AG04450 (cell line): ENCODE measurements at regions of chr10 and their contacts with region 1.

Region 1: GRCh38 chr10:52488606-52489485 is 174.8 kb downstream of the DKK1 start:
- DNase-seq: no peak
- H3K4me3 ChIP-seq: no peak overlapping the region
- H3K27ac ChIP-seq: no peak overlapping the region
- H3K27me3 ChIP-seq: no peaks in the 10 kb centered on the region
- CTCF ChIP-seq: peak; percentile 58

Region 2: DNA sequence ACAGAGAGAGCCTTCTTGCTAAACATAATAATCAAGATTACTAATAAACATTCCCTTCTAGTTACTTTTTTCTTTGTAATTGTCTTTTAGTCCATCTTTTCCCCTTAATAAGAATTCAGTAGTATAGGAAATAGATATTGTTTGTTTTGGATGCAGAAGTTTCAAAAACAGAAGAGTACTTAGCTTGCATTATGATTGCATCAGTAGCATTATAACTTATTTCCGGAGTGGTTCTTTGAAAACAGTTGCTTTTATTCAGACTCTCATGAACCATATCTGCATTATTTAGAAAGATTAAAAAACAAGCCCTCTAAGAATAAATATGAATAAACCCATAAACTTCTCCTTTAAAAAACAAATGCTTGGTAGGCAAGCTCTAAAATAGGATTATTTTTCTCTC is 208.8 kb before region 1 on chr10:
- CTCF ChIA-PET with region 1: no interaction called
- POLR2A ChIA-PET with region 1: no interaction called
- DNase-seq: no peak
- H3K4me3 ChIP-seq: no peak overlapping the region
- H3K27ac ChIP-seq: no peak overlapping the region
- H3K27me3 ChIP-seq: no peaks in the 10 kb centered on the region
- CTCF ChIP-seq: no peak

Region 3: DNA sequence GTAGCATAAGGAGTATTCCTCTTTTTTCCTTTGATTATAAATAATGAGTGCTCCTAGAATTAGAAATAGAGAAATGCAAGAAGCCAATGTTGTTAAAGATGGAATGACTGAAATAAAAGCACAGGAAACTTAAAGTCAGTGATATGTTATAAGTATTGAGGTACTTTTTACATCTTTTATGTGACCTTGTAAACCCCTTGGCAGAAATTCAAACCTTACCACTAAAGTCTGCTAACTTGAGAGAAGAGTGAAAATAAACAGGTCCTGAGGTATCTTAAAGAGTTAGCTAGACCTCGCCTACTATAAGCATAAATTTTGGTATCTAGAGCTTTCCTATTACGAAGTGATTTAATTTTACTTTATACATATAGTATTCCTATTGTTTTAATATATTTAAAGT is 13.4 kb after region 1 on chr10:
- CTCF ChIA-PET with region 1: interaction called, 10 read pairs
- POLR2A ChIA-PET with region 1: no interaction called
- DNase-seq: no peak
- H3K4me3 ChIP-seq: no peak overlapping the region
- H3K27ac ChIP-seq: no peak overlapping the region
- H3K27me3 ChIP-seq: no peaks in the 10 kb centered on the region
- CTCF ChIP-seq: no peak

Region 4: GRCh38 chr10:52779541-52780390 is 290.9 kb after region 1 on chr10:
- CTCF ChIA-PET with region 1: no interaction called
- POLR2A ChIA-PET with region 1: no interaction called
- DNase-seq: peak; percentile 15
- H3K4me3 ChIP-seq: no peak overlapping the region
- H3K27ac ChIP-seq: no peak overlapping the region
- H3K27me3 ChIP-seq: peaks cover 12% of the 10 kb centered on the region
- CTCF ChIP-seq: peak; percentile 97